ENCODE measurements at regions of chr12 and their contacts with region 1.

Region 1: DNA sequence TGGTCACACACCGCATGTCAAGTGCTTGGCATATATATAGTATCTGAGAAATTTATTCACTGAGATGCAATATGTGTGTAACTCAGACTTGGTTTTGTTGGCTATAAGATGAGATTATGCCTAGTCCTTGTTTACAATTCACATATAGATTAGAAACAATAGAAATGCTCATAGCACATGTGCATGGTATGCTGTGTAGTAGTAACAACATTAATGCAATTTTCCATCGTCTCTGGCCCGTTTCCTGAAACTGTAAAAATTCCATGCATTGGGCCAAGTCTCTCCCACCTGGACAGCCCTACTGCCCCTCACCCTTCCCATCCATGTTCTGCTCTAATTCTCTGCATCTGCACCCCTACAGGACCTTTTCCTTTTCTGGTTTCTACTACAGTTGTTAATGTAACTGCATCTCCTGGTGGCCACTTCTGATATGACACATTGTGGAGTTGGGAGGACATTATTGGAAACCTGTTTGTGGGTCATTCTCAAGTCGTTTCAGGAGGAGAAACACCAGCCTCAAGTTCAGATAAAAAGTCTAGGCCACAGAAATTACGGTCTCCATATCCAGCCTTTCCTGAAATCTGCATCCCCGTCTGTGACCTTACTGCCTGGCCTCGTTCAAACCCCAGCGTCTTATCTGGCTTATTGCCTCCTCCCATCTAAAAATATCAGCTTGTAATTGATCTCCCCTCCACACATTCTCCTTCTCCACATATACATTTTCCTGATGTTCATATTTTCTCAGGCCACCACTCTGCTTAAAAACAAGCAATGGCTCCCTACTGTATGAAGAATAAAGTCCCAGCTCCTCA is 37.5 kb downstream of the EMP1 start:
- DNase-seq: peak in 3 of 5 donors; percentile 35 to 40 (median 36)
- ATAC-seq: peak in 3 of 4 donors; percentile 54 to 70 (median 64)
- H3K4me3 ChIP-seq: no peak overlapping the region
- H3K27ac ChIP-seq: no peak overlapping the region
- H3K4me1 ChIP-seq: peaks cover 0 to 10% (median 0%) of the 10 kb centered on the region in 12 donors
- H3K27me3 ChIP-seq: no peaks in the 10 kb centered on the region
- CTCF ChIP-seq: peak; percentile 61 to 85 (median 78)
- POLR2A ChIP-seq: no peak

Region 2: GRCh38 chr12:12909995-12910391 is 324.0 kb before region 1 on chr12:
- intact Hi-C with region 1: loop called in 7 of 10 experiments (anchors 2 to 5 kb)
- DNase-seq: no peak
- ATAC-seq: peak in 3 of 4 donors; percentile 79 to 92 (median 90)
- H3K4me3 ChIP-seq: no peak overlapping the region
- H3K27ac ChIP-seq: peak overlapping the region in 9 of 12 donors; percentile 1 to 60 (median 15)
- H3K4me1 ChIP-seq: peaks cover 0 to 15% (median 7%) of the 10 kb centered on the region in 12 donors
- H3K27me3 ChIP-seq: peaks cover 0 to 6% (median 0%) of the 10 kb centered on the region in 9 donors
- CTCF ChIP-seq: no peak
- POLR2A ChIP-seq: no peak

Region 3: DNA sequence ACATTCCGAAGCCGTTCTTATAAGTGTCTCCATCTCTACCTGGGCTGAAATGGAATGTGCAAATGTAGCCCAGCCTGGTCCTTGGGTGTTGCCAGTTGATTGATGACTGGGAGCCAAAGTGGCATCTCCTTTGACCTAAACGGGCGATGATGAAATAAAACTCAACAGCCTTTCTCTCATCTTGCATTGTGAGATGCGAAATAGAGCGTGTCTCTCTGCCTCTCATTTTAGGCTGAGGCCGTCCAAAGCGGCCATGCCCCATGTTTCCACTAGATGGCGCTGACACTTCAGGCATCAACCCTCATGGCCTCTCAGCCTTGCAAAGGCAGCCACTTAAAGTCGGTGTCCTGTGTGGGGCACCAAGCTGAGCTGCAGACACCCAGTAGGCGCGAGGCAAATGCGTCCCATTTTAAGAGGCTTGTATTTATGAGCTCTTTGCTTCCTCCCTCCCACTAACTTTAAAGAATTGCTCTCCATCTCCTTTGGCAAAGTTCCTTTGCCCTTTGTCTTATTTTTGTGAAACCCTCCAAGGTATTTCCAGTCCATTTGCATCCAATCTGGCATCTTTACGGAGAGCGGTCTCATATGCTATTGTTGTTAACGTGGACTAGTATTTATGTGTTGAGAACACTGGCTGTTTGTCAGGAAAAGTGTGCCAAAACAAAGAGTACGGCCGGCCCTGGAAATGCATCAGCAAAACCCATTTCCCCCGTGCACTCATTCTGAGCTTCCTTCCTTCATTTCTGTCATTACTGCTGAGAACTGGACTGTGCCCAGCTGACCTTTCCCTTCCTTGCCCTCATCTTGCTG is 317.7 kb before region 1 on chr12:
- intact Hi-C with region 1: loop called in 9 of 10 experiments (anchors 2 to 5 kb)
- DNase-seq: peak; percentile 75 to 88 (median 84)
- ATAC-seq: peak; percentile 86 to 98 (median 96)
- H3K4me3 ChIP-seq: peak overlapping the region in 4 of 12 donors; percentile 10 to 23 (median 16)
- H3K27ac ChIP-seq: peak overlapping the region in 6 of 12 donors; percentile 5 to 46 (median 34)
- H3K4me1 ChIP-seq: peaks cover 0 to 14% (median 7%) of the 10 kb centered on the region in 12 donors
- H3K27me3 ChIP-seq: no peaks in the 10 kb centered on the region
- CTCF ChIP-seq: peak; percentile 96 to 99 (median 98)
- POLR2A ChIP-seq: no peak

Region 4: DNA sequence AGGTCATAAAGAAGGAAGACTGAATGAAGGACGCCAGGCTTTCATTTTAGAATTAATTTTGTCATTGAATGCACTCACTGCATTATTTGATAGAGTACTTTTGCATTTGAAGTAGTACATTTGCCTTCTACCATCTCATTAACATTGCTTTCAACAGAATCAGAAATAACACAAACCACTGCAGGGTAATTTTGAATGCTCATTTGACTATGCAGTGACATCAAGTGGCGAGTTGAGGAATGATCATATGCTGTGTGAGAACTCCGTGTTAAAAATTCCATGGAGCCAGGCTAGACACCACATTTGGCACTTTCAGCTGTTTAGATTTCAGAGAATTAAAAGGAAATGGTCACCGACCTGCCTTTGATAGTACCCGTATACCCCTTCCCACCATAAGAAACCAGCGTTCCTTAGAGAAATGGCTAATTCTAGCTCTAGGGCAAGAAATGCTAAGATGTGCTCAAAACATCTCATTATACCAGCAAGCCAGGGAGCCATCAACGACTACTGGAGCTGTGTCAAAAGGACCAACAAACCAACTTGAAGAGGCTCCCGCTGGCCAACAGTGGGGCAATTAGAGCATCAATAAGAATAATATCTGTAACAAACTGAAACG is 250.5 kb before region 1 on chr12:
- intact Hi-C with region 1: loop called in 1 of 10 experiments (anchors 10 kb)
- DNase-seq: peak in 1 of 5 donors; percentile 27
- ATAC-seq: peak in 3 of 4 donors; percentile 73 to 75 (median 74)
- H3K4me3 ChIP-seq: no peak overlapping the region
- H3K27ac ChIP-seq: no peak overlapping the region
- H3K4me1 ChIP-seq: peaks cover 0 to 15% (median 5%) of the 10 kb centered on the region in 12 donors
- H3K27me3 ChIP-seq: no peaks in the 10 kb centered on the region
- CTCF ChIP-seq: peak; percentile 38 to 76 (median 54)
- POLR2A ChIP-seq: no peak

Region 5: GRCh38 chr12:13023811-13024530 is 210.1 kb before region 1 on chr12:
- intact Hi-C with region 1: loop called in 1 of 10 experiments (anchors 10 kb)
- DNase-seq: peak in 1 of 5 donors; percentile 31
- ATAC-seq: peak; percentile 58 to 86 (median 68)
- H3K4me3 ChIP-seq: no peak overlapping the region
- H3K27ac ChIP-seq: no peak overlapping the region
- H3K4me1 ChIP-seq: peaks cover 0 to 14% (median 0%) of the 10 kb centered on the region in 12 donors
- H3K27me3 ChIP-seq: no peaks in the 10 kb centered on the region
- CTCF ChIP-seq: peak in 6 of 12 donors; percentile 19 to 59 (median 40)
- POLR2A ChIP-seq: no peak

Region 6: DNA sequence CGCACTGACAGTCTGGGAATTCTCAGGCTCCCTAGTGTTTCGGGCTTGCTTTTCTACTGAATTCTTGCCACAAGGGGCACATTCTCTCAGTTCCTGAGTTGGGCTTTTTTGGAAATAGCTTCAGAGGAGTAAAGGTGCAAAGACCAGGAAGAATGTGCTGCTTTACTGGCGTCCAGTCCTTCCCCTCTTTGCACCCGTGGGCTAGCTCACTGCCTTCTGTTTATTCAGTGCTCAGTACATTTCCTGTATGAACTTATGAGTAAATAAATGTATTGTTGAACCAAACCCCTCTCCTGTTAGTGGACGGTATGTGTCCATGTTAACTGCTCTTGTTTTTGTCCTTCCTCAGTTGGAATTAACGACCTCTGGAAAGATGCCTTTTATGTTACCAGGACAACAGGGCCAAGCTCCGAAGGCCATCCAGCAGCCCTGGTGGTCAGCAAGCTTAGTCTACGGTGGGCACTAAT is 154.6 kb before region 1 on chr12:
- intact Hi-C with region 1: no loop called
- DNase-seq: no peak
- ATAC-seq: no peak
- H3K4me3 ChIP-seq: no peak overlapping the region
- H3K27ac ChIP-seq: no peak overlapping the region
- H3K4me1 ChIP-seq: no peaks in the 10 kb centered on the region
- H3K27me3 ChIP-seq: no peaks in the 10 kb centered on the region
- CTCF ChIP-seq: no peak
- POLR2A ChIP-seq: no peak

Region 7: DNA sequence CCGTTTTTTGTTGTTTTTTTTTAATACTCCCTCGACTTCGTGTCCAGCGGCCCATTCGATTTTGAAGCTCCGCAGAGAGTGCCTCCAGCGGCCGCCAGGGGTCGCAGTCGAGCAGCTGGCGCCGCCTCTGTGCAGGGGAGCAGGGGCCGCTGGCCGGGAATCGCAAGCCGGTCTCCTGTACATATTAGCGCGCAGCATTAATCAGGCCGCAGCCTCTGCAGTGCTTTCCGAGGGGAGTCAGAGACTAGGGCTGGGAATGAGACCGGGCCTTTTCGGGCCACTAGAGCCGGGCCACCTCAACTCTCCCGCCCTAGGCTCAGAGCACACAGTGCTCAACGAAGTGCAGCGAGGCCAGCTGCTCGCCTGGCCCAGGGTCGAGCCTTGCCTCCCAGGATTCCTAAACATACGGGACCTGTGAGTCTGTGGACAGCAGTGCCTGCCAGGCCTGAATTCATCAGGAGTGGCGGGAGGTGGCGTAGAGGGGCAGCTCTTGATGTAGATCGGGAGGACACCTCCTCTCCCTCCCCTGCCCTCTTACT is 44.3 kb after region 1 on chr12:
- intact Hi-C with region 1: no loop called
- DNase-seq: peak; percentile 57 to 87 (median 71)
- ATAC-seq: peak; percentile 91 to 98 (median 93)
- H3K4me3 ChIP-seq: peak overlapping the region in 2 of 12 donors; percentile 6 to 22
- H3K27ac ChIP-seq: no peak overlapping the region
- H3K4me1 ChIP-seq: peaks cover 0 to 10% (median 5%) of the 10 kb centered on the region in 12 donors
- H3K27me3 ChIP-seq: peaks cover 0 to 33% (median 0%) of the 10 kb centered on the region in 9 donors
- CTCF ChIP-seq: peak; percentile 97 to 99 (median 98)
- POLR2A ChIP-seq: no peak